Activated CD8-positive, alpha-beta T cell treated with anti-CD3 and anti-CD28 coated beads for 36 hours (primary cell): ENCODE measurements at regions of chr13 and their contacts with region 1.

Region 1: DNA sequence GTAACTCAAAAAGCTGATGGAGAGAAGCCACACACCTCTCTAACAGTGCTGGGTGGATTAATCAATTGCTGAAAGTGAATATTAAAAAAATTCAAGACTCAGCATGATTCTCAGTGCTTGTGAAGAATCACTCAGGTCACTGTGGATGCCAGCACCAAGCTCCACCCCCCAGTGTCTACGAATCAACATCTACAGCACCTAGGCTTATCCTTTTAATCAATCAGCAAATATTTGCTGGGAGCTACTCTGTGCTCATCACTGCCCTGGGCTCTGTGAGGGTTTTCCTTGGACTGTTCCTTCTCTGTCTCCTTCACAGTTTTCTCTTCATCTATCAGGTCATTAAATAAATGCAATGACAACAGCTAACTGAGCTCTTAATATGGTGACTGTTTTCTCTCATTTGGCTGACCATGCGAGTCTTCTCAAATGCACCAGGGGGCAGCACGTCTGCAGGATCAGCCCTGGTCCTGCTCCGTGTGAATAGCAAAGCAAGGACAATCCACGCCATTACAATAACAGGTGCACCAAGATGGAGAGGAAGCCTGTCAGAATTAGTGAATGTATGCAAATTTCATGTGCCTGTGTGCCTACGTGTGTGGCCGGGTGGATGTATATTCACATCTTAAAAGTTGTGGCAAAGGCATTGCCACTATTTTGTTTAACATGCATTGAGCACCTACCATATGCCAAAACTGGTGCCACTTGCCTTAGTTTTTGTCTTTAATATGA is 14.6 kb upstream of the C13orf42 start:
- DNase-seq: peak; percentile 67
- ATAC-seq: peak; percentile 72
- H3K4me3 Mint-ChIP-seq: no peak overlapping the region
- H3K27ac Mint-ChIP-seq: no peak overlapping the region
- H3K4me1 Mint-ChIP-seq: peaks cover 14% of the 10 kb centered on the region
- H3K27me3 Mint-ChIP-seq: peaks cover 19% of the 10 kb centered on the region
- CTCF ChIP-seq: peak; percentile 77

Region 2: DNA sequence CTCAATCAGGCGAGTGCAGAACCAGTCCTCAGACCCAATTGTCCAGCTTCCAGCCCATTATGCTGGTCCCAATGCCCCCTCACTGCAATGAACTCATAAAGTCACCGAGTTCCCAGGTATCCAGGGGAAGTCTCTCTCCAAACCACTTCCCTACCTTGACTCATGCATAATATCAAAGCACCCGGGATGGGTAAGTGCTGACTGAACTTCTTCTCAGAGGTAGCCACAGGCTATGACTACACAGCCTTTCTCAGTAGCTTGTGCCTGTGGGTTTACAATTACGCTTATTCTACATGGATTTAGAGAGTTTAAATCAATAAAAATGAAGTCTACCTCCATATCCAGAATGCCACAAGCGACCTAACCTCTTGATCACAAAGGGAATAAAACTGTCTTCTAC is 12.9 kb before region 1 on chr13:
- CTCF ChIA-PET with region 1: interaction called, 20 read pairs
- POLR2A ChIA-PET with region 1: no interaction called
- intact Hi-C with region 1: no loop called
- DNase-seq: no peak
- ATAC-seq: no peak
- H3K4me3 Mint-ChIP-seq: no peak overlapping the region
- H3K27ac Mint-ChIP-seq: no peak overlapping the region
- H3K4me1 Mint-ChIP-seq: no peaks in the 10 kb centered on the region
- H3K27me3 Mint-ChIP-seq: peaks cover 4% of the 10 kb centered on the region
- CTCF ChIP-seq: no peak

Region 3: GRCh38 chr13:51148952-51149573 is 23.4 kb after region 1 on chr13:
- CTCF ChIA-PET with region 1: interaction called, 18 read pairs
- POLR2A ChIA-PET with region 1: no interaction called
- intact Hi-C with region 1: no loop called
- DNase-seq: peak; percentile 22
- ATAC-seq: no peak
- H3K4me3 Mint-ChIP-seq: no peak overlapping the region
- H3K27ac Mint-ChIP-seq: no peak overlapping the region
- H3K4me1 Mint-ChIP-seq: peaks cover 2% of the 10 kb centered on the region
- H3K27me3 Mint-ChIP-seq: peaks cover 20% of the 10 kb centered on the region
- CTCF ChIP-seq: peak; percentile 18

Region 4: DNA sequence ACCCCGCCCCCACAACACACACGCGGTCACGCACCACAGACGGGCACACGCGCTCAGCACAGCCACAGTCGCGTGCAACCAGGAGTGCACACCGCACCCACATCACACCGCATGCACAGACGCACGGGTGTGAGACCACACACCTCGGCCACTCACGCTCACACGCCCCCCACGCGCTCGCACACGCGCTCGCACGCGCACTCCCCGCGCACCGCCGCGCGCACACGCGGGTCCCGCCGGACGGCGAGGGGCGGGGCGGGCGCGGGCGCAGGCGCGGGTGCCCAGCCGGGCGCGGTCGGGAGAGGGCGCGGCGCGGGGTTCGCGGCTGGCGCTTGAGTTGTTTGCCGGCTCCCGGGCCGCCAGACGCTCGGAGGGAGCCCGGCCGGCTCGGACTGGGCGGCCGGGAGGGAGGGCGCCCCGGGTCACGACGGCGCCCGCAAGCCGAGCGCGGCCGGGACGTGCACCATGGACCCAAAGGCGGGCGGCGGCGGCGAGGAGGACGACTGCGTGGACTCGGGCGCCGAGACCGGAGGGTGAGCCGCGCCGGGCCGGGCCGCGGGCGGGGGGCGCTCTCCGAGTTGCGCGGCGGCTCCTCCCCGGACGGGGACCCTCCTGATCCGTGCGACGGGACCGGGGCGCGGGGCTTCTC is 96.5 kb after region 1 on chr13 and contains the start of gene FAM124A:
- CTCF ChIA-PET with region 1: interaction called, 14 read pairs
- POLR2A ChIA-PET with region 1: no interaction called
- intact Hi-C with region 1: no loop called
- DNase-seq: peak; percentile 43
- ATAC-seq: peak; percentile 93
- H3K4me3 Mint-ChIP-seq: peak within 1 kb of the TSS; percentile 68
- H3K27ac Mint-ChIP-seq: no peak within 1 kb of the TSS
- H3K4me1 Mint-ChIP-seq: no peaks in the 10 kb centered on the region
- H3K27me3 Mint-ChIP-seq: peaks cover 42% of the 10 kb centered on the region
- CTCF ChIP-seq: peak; percentile 16
- total RNA-seq, gene FAM124A: 0.07 to 0.25 TPM

Region 5: DNA sequence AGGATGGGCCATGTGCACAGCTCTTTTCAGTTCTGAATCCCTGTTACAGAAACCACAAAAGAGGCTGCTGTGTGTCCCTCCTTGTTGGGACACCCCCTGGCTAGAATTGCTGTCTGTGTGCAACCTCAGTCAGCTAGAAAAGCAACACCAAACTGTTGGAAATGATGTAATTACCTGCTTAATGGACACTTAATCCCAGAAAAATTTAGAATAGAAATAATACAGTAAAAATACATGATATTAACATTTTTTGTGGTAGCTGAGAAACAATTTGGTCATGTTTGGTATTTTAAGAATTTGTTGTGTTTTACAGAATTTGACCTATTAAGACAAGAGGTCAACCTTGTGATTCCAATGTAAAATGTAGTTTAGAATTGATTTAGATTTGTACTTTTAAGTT is 143.4 kb after region 1 on chr13:
- CTCF ChIA-PET with region 1: interaction called, 10 read pairs
- POLR2A ChIA-PET with region 1: no interaction called
- intact Hi-C with region 1: no loop called
- DNase-seq: no peak
- ATAC-seq: no peak
- H3K4me3 Mint-ChIP-seq: no peak overlapping the region
- H3K27ac Mint-ChIP-seq: no peak overlapping the region
- H3K4me1 Mint-ChIP-seq: no peaks in the 10 kb centered on the region
- H3K27me3 Mint-ChIP-seq: no peaks in the 10 kb centered on the region
- CTCF ChIP-seq: no peak